ENCODE measurements at regions of chr11 and their contacts with region 1.

Region 1: DNA sequence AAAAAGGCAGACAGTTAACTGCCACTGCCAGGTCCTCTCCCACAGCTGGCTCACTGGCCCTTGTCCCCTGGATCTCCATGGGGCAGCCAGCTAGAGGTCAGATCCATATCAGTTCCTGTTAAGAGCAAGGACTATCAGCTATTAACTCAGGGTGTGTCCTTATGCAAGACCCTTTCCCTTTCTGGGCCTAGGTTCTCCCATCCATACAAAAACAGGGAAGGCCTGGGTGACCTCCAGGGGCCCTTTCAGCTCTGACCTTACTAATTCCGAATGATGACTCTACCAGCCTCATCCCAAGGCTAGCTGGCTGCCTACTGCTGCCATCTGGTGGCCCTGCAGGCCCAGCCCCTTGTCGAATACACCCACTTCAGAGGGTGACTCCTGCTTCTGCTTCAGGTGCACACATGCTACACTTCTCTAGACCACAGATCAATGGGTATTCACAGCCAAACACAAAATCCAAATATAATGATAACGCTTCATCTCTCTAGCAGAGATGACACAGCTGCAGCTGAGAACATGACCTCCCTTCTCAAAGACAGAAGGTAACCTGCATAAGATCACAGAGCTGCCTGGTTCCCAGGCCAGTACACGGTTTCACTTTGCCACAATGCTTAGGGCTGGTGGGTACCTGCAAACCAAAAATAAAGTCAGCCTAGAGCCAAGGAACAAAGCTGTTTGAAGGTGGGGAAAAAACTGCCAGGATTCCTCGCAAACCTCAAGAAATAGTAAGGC is 34.1 kb downstream of the SERGEF start:
- DNase-seq: peak; percentile 42 to 74 (median 69)
- ATAC-seq: peak; percentile 74 to 78
- H3K4me3 ChIP-seq: no peak overlapping the region
- H3K27ac ChIP-seq: no peak overlapping the region
- H3K4me1 ChIP-seq: no peaks in the 10 kb centered on the region
- H3K27me3 ChIP-seq: no peaks in the 10 kb centered on the region

Region 2: GRCh38 chr11:17598700-17599459 is 379.8 kb before region 1 on chr11:
- intact Hi-C with region 1: loop called (anchors 5 to 10 kb)
- DNase-seq: peak; percentile 72 to 87 (median 86)
- ATAC-seq: peak; percentile 75 to 79
- H3K4me3 ChIP-seq: no peak overlapping the region
- H3K27ac ChIP-seq: no peak overlapping the region
- H3K4me1 ChIP-seq: no peaks in the 10 kb centered on the region
- H3K27me3 ChIP-seq: no peaks in the 10 kb centered on the region

Region 3: DNA sequence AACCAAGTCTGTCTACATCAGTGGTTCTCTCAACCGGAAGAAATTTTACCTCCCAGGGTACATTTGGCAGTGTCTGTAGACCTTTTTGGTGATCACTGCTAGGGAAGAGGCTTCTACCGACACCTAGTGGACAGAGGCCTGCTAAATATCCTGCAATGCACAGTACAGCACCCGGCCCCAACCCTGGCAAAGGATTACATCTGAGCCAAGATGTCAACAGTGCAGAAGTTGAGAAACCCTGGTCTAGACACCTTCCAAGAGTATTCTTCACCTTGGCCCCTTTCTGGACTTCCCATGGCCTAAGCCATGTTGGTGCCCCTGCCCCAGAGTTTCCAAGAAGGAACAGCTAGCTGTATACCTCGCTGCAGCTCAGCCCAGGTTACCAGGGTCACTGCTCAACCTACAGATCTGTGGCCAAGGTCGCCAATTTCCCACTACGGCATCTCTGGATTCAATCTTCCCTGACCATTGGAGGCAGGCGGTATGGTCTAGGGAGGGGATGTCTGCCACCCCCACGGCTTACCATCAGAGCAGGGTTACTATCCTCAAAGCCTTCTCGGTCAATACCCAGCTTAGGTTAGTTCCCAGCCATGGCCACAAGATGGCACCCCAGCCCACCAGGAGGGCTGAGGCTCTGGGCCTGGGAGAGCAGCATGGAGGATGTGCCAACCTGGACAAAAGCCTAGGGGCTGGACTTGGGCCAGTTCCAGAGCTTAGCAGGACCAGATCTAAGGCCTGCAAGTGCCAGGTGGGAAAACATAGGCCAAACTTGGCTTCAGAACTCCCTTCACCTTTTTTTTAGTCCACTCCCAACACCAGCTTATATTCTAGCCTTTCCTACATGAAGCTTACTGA is 247.9 kb before region 1 on chr11:
- intact Hi-C with region 1: loop called (anchors 1 to 5 kb)
- DNase-seq: peak; percentile 75 to 91 (median 89)
- ATAC-seq: peak; percentile 80 to 86
- H3K4me3 ChIP-seq: no peak overlapping the region
- H3K27ac ChIP-seq: no peak overlapping the region
- H3K4me1 ChIP-seq: peaks cover 4% of the 10 kb centered on the region
- H3K27me3 ChIP-seq: no peaks in the 10 kb centered on the region

Region 4: DNA sequence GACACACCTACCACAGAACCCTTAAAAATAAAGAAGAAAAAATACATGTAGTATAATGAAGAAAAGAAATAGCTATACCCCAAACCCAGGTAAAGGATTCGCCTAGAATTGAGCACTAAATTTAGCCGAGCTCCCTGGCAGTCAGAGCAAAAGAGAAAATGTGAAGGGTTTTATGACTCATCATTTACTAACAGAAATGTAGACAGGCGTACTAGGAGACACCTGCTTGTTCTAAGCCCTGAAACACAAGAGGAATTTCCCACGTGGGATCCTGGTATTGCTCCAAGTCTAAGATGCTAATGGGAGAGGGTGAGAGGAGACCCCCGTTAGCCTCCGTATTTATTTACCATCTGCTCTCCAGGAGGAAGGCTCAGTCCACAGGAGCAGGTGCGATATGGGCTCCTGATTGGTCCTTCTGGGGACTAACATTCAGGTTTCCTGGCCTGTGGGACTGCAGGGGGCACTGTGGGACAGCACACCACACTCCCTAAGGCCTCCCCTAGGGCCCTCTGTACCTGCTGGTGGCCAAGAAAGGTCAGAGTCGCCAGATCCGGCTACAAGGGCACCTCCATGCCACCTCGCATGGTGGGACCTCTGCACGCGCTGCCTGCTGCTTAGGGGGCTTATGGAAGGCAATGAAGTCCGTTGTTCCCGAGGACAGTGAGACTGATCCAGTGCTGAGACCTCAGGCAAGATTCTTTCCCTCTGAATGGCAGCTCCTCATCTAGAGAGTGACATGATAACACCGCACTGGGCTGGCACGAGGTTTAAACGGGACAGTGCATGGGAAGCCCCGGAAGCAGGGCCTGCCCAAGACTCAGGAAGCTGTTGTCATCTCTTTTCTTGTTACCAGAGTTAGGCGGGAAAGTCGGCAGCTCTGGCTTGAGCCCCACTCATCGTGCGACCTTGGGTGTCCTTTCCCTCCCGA is 218.4 kb before region 1 on chr11:
- intact Hi-C with region 1: loop called (anchors 5 to 10 kb)
- DNase-seq: peak in 2 of 3 donors; percentile 26 to 65
- ATAC-seq: peak; percentile 80 to 82
- H3K4me3 ChIP-seq: no peak overlapping the region
- H3K27ac ChIP-seq: no peak overlapping the region
- H3K4me1 ChIP-seq: no peaks in the 10 kb centered on the region
- H3K27me3 ChIP-seq: no peaks in the 10 kb centered on the region

Measured in right cardiac atrium (tissue), 5 donors.